Activated B cell treated with CpG ODN at 0.5 μM for 24 hours (primary cell): ENCODE measurements at regions of chr2 and their contacts with region 1.

Region 1: GRCh38 chr2:95165129-95166064 is at the start of gene ZNF2:
- DNase-seq: peak; percentile 91
- ATAC-seq: peak; percentile 93
- H3K4me3 Mint-ChIP-seq: peak within 1 kb of the TSS; percentile 100
- H3K27ac Mint-ChIP-seq: peak within 1 kb of the TSS; percentile 97
- H3K4me1 Mint-ChIP-seq: peaks cover 27% of the 10 kb centered on the region
- H3K27me3 Mint-ChIP-seq: no peaks in the 10 kb centered on the region
- CTCF ChIP-seq: no peak
- total RNA-seq, gene ZNF2: 4.9 and 5.3 TPM in 2 replicates

Region 2: GRCh38 chr2:95207111-95207961 is 41.9 kb after region 1 on chr2 and contains the start of gene ZNF892:
- CTCF ChIA-PET with region 1: no interaction called
- POLR2A ChIA-PET with region 1: interaction called, 6 read pairs
- intact Hi-C with region 1: loop called (anchors 1 kb)
- DNase-seq: peak; percentile 81
- ATAC-seq: peak; percentile 97
- H3K4me3 Mint-ChIP-seq: peak within 1 kb of the TSS; percentile 94
- H3K27ac Mint-ChIP-seq: peak within 1 kb of the TSS; percentile 79
- H3K4me1 Mint-ChIP-seq: peaks cover 16% of the 10 kb centered on the region
- H3K27me3 Mint-ChIP-seq: no peaks in the 10 kb centered on the region
- CTCF ChIP-seq: no peak
- total RNA-seq, gene ZNF892: 4.0 and 4.3 TPM in 2 replicates